Caco-2 (cell line): ENCODE measurements at regions of chr9 and their contacts with region 1.

Region 1: DNA sequence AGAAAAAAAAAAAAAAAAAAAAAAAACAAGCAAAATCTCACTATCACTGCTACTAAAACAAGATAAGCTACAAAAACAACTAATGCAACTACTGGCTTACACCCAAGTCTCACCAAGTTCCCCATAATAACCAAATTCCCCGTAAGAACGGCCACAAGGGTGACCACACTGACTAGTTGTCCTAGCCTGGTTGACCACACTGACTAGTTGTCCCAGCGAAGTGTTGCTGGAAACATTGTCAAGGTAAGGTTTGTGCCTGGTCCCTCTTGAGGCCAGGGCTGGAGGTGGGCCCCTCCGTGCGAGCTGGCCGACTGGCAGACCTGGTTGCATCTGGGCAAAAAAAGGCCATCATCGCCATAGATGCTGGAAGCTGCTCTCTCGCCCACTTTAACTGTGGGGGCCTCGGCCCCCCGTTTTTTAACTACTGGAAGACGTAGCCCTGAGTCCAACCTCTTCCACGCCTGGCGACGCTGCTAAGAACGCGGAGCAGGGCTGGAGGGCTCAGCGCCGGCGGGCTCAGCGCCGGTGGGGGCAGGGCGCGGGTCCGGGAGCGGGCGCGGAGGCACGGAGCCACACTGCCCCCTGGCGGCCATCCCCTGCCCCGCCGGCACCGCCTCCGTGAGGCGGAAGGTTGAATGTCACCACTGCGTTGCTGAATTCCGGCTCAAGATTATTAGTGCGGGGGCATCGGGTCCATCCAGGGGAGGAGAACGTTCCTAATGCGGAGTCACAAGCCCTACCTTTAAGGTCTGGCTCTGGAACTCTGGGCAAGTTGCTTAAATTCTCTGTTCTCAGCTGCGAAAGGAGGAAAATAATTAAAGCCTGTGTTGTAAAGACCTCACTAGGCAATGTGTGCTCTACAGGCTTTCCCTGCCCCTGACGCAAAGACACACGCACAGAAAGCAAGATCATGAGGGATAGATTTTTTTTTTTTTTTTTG is 84.0 kb downstream of the HSD17B3 start:
- DNase-seq: peak; percentile 66 to 90
- H3K4me3 ChIP-seq: peak overlapping the region; percentile 29
- H3K4me3 Mint-ChIP-seq: peak overlapping the region; percentile 75
- H3K27ac Mint-ChIP-seq: peak overlapping the region; percentile 45
- H3K4me1 ChIP-seq: 0 out of 2 replicates have a peak, but pooled peaks cover 8% of the 10 kb centered on the region
- H3K4me1 Mint-ChIP-seq: no peaks in the 10 kb centered on the region
- H3K27me3 ChIP-seq: no peaks in the 10 kb centered on the region
- H3K27me3 Mint-ChIP-seq: no peaks in the 10 kb centered on the region
- CTCF ChIP-seq: peak; percentile 96 to 97

Region 2: DNA sequence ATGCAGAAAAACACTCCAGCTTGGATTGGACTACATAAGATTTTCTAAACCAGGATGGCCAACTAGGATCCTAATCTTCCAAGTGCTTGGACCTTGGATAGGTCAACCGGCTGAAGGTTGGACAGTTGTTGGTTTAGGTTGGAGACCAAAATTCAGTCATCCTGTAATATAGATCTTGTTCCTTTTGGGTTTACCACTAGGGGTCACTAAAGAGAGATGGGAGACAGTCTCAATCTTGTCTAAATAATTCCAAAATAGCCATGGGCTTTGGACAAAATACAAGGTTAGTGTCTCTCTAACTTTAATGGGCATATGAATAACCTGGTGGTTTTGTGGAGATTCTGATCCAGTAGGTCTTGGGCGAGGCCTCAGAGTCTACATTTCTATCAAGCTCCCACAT is 491.3 kb before region 1 on chr9:
- CTCF ChIA-PET with region 1: no interaction called
- POLR2A ChIA-PET with region 1: no interaction called
- intact Hi-C with region 1: loop called (anchors 5 kb)
- DNase-seq: peak in 1 of 2 experiments; percentile 34
- H3K4me3 ChIP-seq: no peak overlapping the region
- H3K4me3 Mint-ChIP-seq: no peak overlapping the region
- H3K27ac Mint-ChIP-seq: no peak overlapping the region
- H3K4me1 ChIP-seq: peaks cover 3% of the 10 kb centered on the region
- H3K4me1 Mint-ChIP-seq: peaks cover 16% of the 10 kb centered on the region
- H3K27me3 ChIP-seq: no peaks in the 10 kb centered on the region
- H3K27me3 Mint-ChIP-seq: no peaks in the 10 kb centered on the region
- CTCF ChIP-seq: peak; percentile 40 to 50

Region 3: GRCh38 chr9:96020792-96021550 is 197.1 kb before region 1 on chr9:
- CTCF ChIA-PET with region 1: no interaction called
- POLR2A ChIA-PET with region 1: no interaction called
- intact Hi-C with region 1: loop called (anchors 10 kb)
- DNase-seq: peak in 1 of 2 experiments; percentile 32
- H3K4me3 ChIP-seq: peak overlapping the region; percentile 56
- H3K4me3 Mint-ChIP-seq: peak overlapping the region; percentile 83
- H3K27ac Mint-ChIP-seq: no peak overlapping the region
- H3K4me1 ChIP-seq: no peaks in the 10 kb centered on the region
- H3K4me1 Mint-ChIP-seq: no peaks in the 10 kb centered on the region
- H3K27me3 ChIP-seq: no peaks in the 10 kb centered on the region
- H3K27me3 Mint-ChIP-seq: no peaks in the 10 kb centered on the region
- CTCF ChIP-seq: no peak

Region 4: DNA sequence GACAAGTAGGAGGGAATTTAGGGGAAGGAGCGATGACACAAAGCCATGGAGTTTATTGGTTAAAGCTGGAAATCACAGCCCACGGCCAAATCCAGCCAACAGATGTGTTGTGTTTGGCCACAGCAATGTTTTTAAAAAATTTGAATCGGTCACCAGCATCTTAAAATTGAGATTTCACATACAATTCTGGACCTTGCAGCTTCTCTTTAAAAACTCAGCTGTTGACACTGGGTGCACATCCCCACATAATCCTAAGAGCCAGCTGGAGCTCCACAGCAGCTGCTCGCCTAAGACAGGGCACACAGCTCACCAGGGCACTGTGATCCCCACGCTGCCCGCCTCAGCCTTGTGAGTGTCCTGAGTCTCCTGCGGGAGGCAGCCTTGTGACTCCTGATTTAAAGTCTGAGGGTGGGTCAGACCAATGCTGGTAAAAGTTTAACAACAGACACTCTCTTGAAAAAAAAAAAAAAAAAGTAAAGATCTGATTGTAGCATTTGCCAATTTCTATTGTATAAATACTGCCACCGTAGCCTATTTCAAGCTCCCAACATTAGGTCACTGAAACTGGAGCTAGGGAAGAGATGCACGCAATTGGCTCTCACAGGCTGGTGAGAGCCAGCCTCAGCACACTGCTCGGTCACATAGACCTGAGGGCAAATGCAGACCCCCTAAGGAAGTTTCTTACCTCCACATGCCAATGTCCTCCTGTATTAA is 40.9 kb before region 1 on chr9:
- CTCF ChIA-PET with region 1: interaction called, 4 read pairs
- POLR2A ChIA-PET with region 1: no interaction called
- intact Hi-C with region 1: loop called (anchors 1 kb)
- DNase-seq: peak; percentile 42 to 51
- H3K4me3 ChIP-seq: no peak overlapping the region
- H3K4me3 Mint-ChIP-seq: no peak overlapping the region
- H3K27ac Mint-ChIP-seq: no peak overlapping the region
- H3K4me1 ChIP-seq: peaks cover 47% of the 10 kb centered on the region
- H3K4me1 Mint-ChIP-seq: peaks cover 15% of the 10 kb centered on the region
- H3K27me3 ChIP-seq: no peaks in the 10 kb centered on the region
- H3K27me3 Mint-ChIP-seq: no peaks in the 10 kb centered on the region
- CTCF ChIP-seq: peak in 1 of 2 experiments; percentile 17